ENCODE measurements at regions of chr16 and their contacts with region 1.

Region 1: GRCh38 chr16:12311309-12311708 is 334.8 kb downstream of the SNX29 start:
- DNase-seq: peak; percentile 58
- ATAC-seq: peak; percentile 87
- H3K4me3 Mint-ChIP-seq: peak overlapping the region; percentile 9; the same call in 1 of the 2 replicates
- H3K27ac Mint-ChIP-seq: peak overlapping the region; percentile 36
- H3K4me1 Mint-ChIP-seq: peaks cover 47% of the 10 kb centered on the region
- H3K27me3 Mint-ChIP-seq: peaks cover 2% of the 10 kb centered on the region; the same call in 1 of the 2 replicates
- CTCF ChIP-seq: no peak

Region 2: DNA sequence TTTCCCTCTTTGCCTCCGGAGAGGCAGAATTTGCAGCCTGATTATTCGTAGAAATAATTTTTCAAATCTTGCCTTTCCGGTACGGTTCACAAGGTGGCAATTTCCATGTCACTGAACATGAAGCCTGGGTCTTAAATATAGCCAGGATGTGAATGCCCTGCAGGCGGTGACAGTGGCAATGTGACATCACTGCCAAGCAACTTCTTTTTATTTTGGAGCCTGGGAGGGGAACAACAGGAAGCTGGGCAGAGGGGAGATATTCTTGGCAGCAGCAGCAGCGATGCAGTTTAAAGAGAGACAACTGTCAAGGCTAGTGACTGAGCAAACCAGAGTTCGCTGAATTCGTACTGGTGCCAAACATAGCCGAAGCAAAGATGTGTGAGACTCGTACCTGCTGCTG is 163.6 kb before region 1 on chr16:
- CTCF ChIA-PET with region 1: no interaction called
- POLR2A ChIA-PET with region 1: no interaction called
- DNase-seq: no peak
- ATAC-seq: peak; percentile 25
- H3K4me3 Mint-ChIP-seq: no peak overlapping the region
- H3K27ac Mint-ChIP-seq: peak overlapping the region; percentile 58
- H3K4me1 Mint-ChIP-seq: peaks cover 41% of the 10 kb centered on the region
- H3K27me3 Mint-ChIP-seq: no peaks in the 10 kb centered on the region
- CTCF ChIP-seq: no peak

Region 3: DNA sequence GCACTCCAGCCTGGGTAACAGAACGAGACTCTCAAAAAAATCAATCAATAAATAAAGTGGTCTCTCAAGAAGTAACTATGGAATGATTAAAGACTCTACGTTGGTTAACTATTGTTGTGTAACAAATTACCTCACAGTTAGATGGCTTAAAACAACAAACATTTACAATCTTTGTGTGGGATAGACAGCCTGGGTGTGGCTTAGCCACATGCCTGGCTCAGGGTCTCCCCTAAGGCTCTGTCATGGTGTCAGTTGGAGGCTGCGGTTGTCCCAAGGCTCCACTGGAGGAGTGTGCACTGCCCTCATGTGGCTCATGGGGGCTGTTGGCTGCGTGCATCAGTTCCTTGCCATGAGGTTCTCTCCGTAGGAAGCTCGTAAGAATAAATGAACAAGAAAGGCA is 40.3 kb before region 1 on chr16:
- CTCF ChIA-PET with region 1: interaction called, 10 read pairs
- POLR2A ChIA-PET with region 1: no interaction called
- DNase-seq: peak; percentile 62
- ATAC-seq: peak; percentile 99
- H3K4me3 Mint-ChIP-seq: no peak overlapping the region
- H3K27ac Mint-ChIP-seq: no peak overlapping the region
- H3K4me1 Mint-ChIP-seq: no peaks in the 10 kb centered on the region
- H3K27me3 Mint-ChIP-seq: no peaks in the 10 kb centered on the region
- CTCF ChIP-seq: no peak